ENCODE measurements at regions of chr5 and their contacts with region 1.

Region 1: GRCh38 chr5:55691265-55692105 is 20.6 kb downstream of the SLC38A9 start:
- DNase-seq: peak; percentile 30
- CTCF ChIP-seq: peak; percentile 39

Region 2: DNA sequence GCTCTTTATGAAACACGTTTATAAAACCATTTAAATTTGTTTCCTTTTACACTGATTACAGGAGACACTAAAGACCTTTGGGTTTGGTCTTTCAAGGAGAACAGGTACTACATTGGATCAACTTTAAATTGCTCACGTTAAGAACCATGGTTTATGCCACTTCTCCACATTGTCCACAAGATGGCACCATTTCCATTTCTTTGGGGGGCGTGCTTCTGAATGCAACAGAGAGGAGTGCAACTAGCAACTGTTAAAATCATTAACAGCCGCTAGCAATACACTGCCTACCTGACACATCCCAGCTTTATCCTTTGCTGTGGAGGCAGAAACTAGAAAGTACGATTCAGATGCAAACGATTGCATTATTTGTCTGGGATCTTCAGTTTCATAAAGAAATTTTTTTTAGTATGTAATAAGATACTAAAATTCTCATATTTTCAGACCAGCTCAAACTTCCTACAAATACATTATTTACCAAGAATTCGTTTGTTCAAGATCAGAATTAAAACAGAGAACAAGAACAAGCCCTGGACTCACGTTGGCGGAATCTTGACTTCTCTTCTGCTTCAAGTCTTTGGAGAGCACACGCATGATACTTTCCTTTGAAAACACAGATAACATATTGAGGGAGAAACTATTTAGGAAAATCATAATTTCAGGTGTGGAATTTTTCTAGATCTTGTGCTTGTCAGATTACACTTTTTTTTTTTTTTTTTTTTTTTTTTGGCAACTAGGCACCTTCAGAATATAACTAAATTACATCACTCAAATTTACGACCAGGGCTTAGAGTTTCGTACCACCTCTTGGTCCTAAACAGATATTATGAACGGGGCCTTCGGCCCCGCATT is 519.2 kb before region 1 on chr5:
- CTCF ChIA-PET with region 1: interaction called, 19 read pairs
- POLR2A ChIA-PET with region 1: no interaction called
- DNase-seq: peak; percentile 82
- CTCF ChIP-seq: peak; percentile 80

Region 3: DNA sequence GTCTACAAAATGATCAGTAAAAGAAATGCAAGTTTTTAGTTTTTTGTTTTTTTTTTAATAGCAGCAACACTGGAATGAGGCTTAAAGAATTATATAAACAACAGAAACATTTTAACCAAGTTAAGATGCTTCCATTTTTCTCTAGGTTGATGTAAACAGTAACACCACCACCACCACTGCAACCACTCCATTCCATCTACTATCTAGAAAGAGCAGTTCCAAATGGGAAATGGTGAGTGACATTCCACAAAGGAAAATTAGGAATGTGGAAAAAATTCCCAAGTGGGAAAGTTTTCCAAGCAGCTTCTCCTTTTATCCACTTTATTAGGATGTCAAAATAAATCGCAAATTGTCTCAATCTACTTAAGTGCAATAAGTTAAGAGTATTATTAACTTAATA is 11.9 kb before region 1 on chr5:
- CTCF ChIA-PET with region 1: interaction called, 27 read pairs
- POLR2A ChIA-PET with region 1: interaction called, 3 read pairs
- DNase-seq: no peak
- CTCF ChIP-seq: no peak

Region 4: GRCh38 chr5:55701462-55702103 is 10.1 kb after region 1 on chr5:
- CTCF ChIA-PET with region 1: interaction called, 10 read pairs
- POLR2A ChIA-PET with region 1: no interaction called
- DNase-seq: no peak
- CTCF ChIP-seq: no peak

Region 5: DNA sequence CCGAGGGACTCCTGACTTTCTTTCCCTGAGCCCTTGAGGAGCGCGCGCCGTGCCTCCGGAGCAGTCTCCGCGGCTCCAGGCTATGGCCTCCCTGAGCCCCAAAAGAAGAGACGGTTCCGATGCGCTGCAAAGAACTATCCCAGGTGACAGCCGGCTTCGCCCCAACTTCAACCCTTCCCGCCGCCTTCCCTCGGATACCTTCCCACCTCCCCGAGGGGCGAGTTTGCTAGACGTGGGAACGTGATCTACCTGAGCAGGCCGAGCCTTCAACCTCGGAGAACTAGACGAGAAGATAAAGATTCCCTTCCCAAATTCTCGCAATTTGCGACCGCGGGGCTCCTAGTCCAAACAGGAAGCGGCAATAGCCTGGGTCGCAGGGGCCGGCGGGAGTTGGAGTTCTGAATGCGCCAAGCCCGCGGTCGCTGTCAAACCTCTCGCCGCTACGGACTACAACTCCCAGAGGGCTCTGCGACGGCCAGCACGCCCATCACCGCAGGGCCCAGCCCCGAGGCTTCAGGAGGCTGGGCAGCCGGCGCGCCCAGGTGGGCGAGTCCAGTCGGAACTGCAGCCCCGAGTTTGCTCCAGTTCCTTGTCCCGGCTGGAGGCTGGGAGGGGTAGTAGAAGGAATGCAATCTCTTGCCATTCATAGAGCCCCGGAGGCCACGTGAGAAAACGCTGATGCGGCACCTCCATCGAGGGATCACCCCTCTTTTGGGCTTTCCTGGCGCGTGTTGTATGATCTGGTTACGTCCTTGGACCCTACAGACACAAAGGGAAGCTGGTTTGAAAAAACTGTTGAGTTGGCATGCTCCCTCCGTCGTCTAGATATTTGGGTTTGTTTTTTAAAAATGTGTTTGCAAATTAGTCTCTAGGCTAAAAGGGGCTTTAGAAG is 20.7 kb after region 1 on chr5 and contains the start of gene SLC38A9:
- CTCF ChIA-PET with region 1: interaction called, 11 read pairs
- POLR2A ChIA-PET with region 1: no interaction called
- DNase-seq: peak; percentile 93
- CTCF ChIP-seq: no peak